A673 (cell line): ENCODE measurements at regions of chr13 and their contacts with region 1.

Region 1: GRCh38 chr13:21579754-21580316 is 24.1 kb downstream of the MICU2 start:
- DNase-seq: no peak
- H3K4me3 ChIP-seq: no peak overlapping the region
- H3K27ac ChIP-seq: no peak overlapping the region
- H3K4me1 ChIP-seq: peaks cover 41% of the 10 kb centered on the region
- H3K27me3 ChIP-seq: no peaks in the 10 kb centered on the region
- CTCF ChIP-seq: no peak

Region 2: GRCh38 chr13:21511849-21512248 is 68.0 kb before region 1 on chr13:
- CTCF ChIA-PET with region 1: no interaction called
- POLR2A ChIA-PET with region 1: no interaction called
- intact Hi-C with region 1: no loop called
- DNase-seq: no peak
- H3K4me3 ChIP-seq: no peak overlapping the region
- H3K27ac ChIP-seq: no peak overlapping the region
- H3K4me1 ChIP-seq: no peaks in the 10 kb centered on the region
- H3K27me3 ChIP-seq: no peaks in the 10 kb centered on the region
- CTCF ChIP-seq: no peak

Region 3: GRCh38 chr13:21883713-21884112 is 303.9 kb after region 1 on chr13:
- CTCF ChIA-PET with region 1: no interaction called
- POLR2A ChIA-PET with region 1: no interaction called
- intact Hi-C with region 1: no loop called
- DNase-seq: no peak
- H3K4me3 ChIP-seq: no peak overlapping the region
- H3K27ac ChIP-seq: no peak overlapping the region
- H3K4me1 ChIP-seq: no peaks in the 10 kb centered on the region
- H3K27me3 ChIP-seq: no peaks in the 10 kb centered on the region
- CTCF ChIP-seq: no peak

Region 4: DNA sequence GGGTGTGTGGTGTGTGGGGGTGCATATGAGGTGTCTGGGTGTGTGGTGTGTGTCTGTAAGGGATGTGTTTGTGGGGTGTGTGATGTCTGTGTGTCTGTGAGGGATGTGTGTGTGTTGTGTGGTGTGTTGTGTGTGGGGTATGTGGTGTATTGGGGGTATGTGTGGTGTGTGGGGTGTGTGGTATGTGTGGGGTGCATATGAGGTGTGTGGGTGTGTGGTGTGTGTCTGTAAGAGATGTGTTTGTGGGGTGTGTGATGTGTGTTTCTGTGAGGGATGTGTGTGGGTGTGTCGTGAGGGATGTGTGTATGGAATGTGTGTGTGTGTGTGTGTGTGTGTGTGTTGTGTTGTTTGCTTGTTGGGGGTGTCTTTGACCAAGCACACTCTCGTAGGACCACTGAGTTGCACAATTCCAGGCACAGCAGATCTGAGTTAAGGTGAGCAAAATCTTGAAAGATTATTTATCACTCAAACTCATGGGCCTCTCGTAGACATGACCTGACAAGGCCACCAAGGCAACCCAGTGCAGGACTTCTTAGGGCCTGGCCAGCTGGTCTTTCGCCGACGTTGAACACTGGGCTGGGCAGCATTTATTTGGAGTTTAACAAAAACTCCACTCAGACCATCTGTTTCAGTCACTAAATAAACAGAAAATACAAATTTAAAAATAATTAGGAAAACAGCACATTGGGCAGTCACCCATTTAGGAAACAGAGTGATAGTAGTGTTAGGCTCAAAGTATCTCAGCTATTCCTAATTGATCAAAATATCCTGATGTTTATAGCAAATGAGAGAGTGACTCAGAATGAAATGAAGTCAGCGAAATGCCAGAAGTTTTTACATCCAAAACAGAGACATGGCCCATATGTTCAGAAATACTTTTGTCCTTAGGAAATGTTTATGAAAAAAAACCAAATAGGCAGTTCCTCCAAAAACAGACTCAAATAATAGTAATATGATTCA is 392.1 kb after region 1 on chr13:
- CTCF ChIA-PET with region 1: interaction called, 22 read pairs
- POLR2A ChIA-PET with region 1: no interaction called
- intact Hi-C with region 1: no loop called
- DNase-seq: no peak
- H3K4me3 ChIP-seq: no peak overlapping the region
- H3K27ac ChIP-seq: no peak overlapping the region
- H3K4me1 ChIP-seq: no peaks in the 10 kb centered on the region
- H3K27me3 ChIP-seq: no peaks in the 10 kb centered on the region
- CTCF ChIP-seq: no peak